PC-9 (cell line): ENCODE measurements at regions of chr7 and their contacts with region 1.

Region 1: DNA sequence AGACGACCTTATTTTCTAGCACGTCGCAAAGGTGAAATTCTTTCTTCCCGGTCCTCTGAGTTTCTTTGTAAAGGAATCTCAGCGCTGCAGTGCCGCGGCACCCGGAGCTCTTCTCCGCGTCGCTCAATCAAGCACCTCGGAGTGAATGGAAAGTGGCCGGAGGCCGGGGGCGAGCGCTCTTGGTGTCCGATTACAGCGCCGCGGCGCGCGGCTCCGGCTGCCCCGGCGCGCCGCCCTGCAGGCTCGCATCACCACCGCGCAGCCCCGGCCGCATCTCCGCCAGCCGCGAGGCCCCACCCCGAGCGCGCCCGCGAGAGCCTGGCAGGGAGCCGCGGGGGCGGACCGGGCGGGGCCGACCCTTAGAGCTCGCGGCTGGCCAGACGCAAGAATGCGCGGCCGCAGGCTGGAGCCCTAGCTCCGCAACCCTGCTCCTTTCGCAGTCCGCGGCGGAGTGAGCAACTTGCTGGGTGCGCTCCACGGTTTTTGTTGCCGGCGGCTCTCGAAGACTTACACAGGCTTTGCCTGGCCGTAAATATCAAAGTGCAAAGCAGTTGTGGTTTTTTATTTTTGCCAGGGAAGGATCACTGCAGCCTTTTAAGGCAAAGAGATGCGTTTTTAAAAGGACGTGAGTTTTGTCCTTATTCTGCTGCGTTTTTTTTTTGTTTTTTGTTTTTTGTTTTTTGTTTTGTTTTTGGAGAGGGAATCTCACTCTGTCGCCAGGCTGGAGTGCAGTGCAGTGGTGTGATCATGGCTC is at the start of gene SEMA3C:
- DNase-seq: peak; percentile 89 to 98
- H3K4me3 ChIP-seq: peak within 1 kb of the TSS; percentile 86
- H3K27ac ChIP-seq: peak within 1 kb of the TSS; percentile 85
- H3K4me1 ChIP-seq: peaks cover 55% of the 10 kb centered on the region
- H3K27me3 ChIP-seq: no peaks in the 10 kb centered on the region
- CTCF ChIP-seq: no peak
- total RNA-seq, gene SEMA3C: 19.9 and 20.9 TPM in 2 replicates

Region 2: DNA sequence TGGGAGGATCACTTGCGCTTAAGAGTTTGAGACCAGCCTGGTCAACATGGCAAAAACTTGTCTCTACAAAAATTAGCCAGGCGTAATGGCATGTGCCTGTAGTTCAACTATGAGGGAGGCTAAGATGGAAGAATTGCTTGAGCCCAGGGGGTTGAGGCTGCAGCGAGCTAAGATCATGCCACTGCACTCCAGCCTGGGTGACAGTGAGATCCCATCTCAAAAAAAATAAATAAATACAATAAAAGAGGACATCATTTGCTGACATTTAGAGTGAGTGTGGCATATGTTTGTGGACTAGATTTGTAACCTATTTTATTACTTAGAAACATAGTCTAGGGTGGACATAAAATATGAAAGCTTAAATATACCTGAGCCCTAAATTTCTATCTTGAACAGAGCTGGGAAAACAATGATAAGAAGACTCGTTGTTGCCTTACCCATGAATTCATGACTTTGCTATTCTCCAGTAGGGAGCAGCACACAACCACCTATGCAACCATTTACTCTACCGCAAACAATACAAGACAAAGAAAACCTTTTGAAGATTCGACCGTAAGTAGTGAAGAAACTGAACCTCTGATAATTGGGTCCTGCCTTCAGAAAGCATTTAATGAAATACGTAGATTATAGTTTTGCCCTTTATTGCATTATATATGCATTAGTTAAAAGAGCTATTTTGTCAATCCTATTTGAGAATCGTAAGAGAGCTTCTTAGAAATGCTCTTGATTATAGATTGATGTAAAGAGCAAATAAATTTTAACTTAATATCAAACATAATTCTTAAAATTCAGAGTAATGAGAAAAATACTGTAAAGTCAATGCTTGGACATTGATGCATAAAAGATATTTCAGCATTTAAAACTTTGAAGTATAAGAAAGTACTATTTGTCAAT is 490.7 kb before region 1 on chr7:
- CTCF ChIA-PET with region 1: no interaction called
- POLR2A ChIA-PET with region 1: interaction called, 3 read pairs
- intact Hi-C with region 1: loop called (anchors 5 kb)
- DNase-seq: peak; percentile 35 to 50
- H3K4me3 ChIP-seq: no peak overlapping the region
- H3K27ac ChIP-seq: no peak overlapping the region
- H3K4me1 ChIP-seq: no peaks in the 10 kb centered on the region
- H3K27me3 ChIP-seq: no peaks in the 10 kb centered on the region
- CTCF ChIP-seq: peak; percentile 75

Region 3: GRCh38 chr7:80826520-80827238 is 92.4 kb before region 1 on chr7:
- CTCF ChIA-PET with region 1: no interaction called
- POLR2A ChIA-PET with region 1: no interaction called
- intact Hi-C with region 1: loop called (anchors 5 kb)
- DNase-seq: peak in 1 of 2 experiments; percentile 17
- H3K4me3 ChIP-seq: no peak overlapping the region
- H3K27ac ChIP-seq: peak overlapping the region; percentile 9; the same call in 1 of the 2 replicates
- H3K4me1 ChIP-seq: peaks cover 14% of the 10 kb centered on the region
- H3K27me3 ChIP-seq: no peaks in the 10 kb centered on the region
- CTCF ChIP-seq: no peak

Region 4: GRCh38 chr7:80941208-80941758 is 22.2 kb after region 1 on chr7:
- CTCF ChIA-PET with region 1: interaction called, 20 read pairs
- POLR2A ChIA-PET with region 1: interaction called, 3 read pairs
- intact Hi-C with region 1: loop called (anchors 1 kb)
- DNase-seq: peak in 1 of 2 experiments; percentile 71
- H3K4me3 ChIP-seq: no peak overlapping the region
- H3K27ac ChIP-seq: peak overlapping the region; percentile 98
- H3K4me1 ChIP-seq: peaks cover 39% of the 10 kb centered on the region
- H3K27me3 ChIP-seq: no peaks in the 10 kb centered on the region
- CTCF ChIP-seq: no peak

Region 5: GRCh38 chr7:81173766-81174281 is 254.7 kb after region 1 on chr7:
- CTCF ChIA-PET with region 1: interaction called, 4 read pairs
- POLR2A ChIA-PET with region 1: no interaction called
- intact Hi-C with region 1: loop called (anchors 2 kb)
- DNase-seq: peak in 1 of 2 experiments; percentile 48
- H3K4me3 ChIP-seq: no peak overlapping the region
- H3K27ac ChIP-seq: no peak overlapping the region
- H3K4me1 ChIP-seq: peaks cover 13% of the 10 kb centered on the region; the same call in 1 of the 2 replicates
- H3K27me3 ChIP-seq: no peaks in the 10 kb centered on the region
- CTCF ChIP-seq: no peak

Region 6: DNA sequence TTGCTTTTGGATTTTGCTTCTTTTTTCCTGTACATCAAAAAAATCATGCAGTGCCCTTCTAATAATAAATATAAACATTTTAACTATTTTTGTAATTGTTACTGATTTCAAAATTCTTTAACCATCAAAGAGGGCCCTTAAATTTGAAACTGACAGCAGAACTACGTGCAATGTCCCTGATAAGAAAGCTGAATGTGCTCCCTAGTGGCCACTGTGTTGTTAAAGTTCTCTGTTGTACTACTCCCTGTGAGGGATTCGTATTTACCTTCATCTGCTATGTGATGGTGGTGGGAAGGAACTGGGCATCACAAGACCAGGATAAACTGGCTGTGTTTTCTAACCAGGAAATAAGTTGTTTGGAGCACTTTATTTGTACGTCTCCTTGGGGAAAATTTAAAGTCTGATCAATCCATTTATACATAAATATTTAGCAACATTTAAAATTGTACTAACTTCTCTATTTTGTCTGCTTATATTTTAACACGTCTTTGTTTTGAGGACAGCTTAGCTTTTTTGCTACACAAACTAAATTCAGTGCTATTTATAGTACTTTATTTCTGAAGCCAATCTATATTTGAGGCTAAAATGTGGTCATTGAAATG is 528.4 kb after region 1 on chr7:
- CTCF ChIA-PET with region 1: interaction called, 6 read pairs
- POLR2A ChIA-PET with region 1: no interaction called
- intact Hi-C with region 1: loop called (anchors 1 kb)
- DNase-seq: peak in 1 of 2 experiments; percentile 12
- H3K4me3 ChIP-seq: no peak overlapping the region
- H3K27ac ChIP-seq: no peak overlapping the region
- H3K4me1 ChIP-seq: no peaks in the 10 kb centered on the region
- H3K27me3 ChIP-seq: no peaks in the 10 kb centered on the region
- CTCF ChIP-seq: peak; percentile 64